ENCODE measurements at regions of chr18 and their contacts with region 1.

Region 1: GRCh38 chr18:44909191-44909719 is 228.6 kb downstream of the SETBP1 start:
- DNase-seq: no peak
- H3K4me3 Mint-ChIP-seq: no peak overlapping the region
- H3K27ac Mint-ChIP-seq: no peak overlapping the region
- H3K4me1 Mint-ChIP-seq: no peaks in the 10 kb centered on the region
- H3K27me3 Mint-ChIP-seq: no peaks in the 10 kb centered on the region
- CTCF ChIP-seq: no peak

Region 2: DNA sequence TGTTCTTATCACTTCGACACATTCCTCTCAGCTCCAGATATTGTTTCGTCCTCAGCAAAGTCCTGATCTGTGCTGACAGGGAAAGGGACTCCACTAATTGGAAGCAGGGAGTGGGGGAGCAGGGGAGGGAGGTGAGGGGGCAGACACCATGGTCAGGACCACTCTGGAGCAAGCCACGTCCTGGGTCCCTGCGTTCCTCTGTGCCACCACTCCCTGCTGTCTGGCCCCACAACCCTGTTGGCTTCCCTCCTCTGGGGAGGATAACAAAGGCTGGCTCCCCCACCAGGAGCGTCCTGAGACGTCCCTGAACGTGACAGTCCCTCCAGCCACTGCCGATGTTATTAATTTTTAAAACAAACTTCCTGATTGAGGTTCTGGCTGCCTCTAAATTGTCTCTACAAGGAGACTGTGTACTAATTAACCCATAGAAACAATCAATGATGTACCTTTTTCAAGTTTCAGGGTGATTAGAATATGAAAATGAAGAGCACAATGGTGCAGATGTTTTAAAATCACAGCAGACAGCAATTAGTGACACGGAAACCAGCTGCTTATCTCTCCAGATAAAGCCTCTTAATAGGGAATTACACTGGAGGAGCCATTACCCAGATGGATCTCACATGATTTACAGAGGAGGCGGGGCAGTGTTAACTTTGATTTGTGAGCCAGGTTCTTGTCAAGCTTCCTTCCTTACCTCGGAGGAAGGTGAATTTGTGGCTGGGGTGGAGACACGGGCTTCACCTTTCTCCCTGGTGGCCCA is 28.9 kb after region 1 on chr18:
- CTCF ChIA-PET with region 1: no interaction called
- intact Hi-C with region 1: no loop called
- DNase-seq: peak; percentile 10
- H3K4me3 Mint-ChIP-seq: no peak overlapping the region
- H3K27ac Mint-ChIP-seq: peak overlapping the region; percentile 29
- H3K4me1 Mint-ChIP-seq: peaks cover 22% of the 10 kb centered on the region
- H3K27me3 Mint-ChIP-seq: no peaks in the 10 kb centered on the region
- CTCF ChIP-seq: no peak

Region 3: DNA sequence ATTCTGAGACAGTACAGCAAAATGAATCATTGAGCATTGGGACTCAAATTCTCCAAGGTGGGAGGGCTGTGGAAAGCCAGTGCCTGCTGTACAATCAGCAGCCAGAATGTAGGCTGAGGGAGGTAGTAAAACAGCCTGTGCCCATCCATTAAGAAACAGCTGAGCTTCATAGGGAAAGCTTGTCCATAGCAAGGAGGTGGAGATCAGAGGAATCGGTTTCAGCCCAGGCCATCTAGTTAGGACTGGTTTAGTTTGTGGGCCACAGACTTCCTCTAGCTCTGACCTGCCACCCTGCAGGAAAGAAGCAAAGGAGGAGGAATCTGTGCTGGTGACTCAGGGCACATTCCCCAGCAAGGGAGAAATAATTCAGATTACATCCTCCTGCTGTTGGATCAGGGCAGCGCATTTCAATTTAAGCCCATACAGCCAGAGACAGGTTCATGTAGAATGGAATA is 104.8 kb after region 1 on chr18:
- CTCF ChIA-PET with region 1: no interaction called
- intact Hi-C with region 1: loop called (anchors 10 kb)
- DNase-seq: peak; percentile 43
- H3K4me3 Mint-ChIP-seq: no peak overlapping the region
- H3K27ac Mint-ChIP-seq: no peak overlapping the region
- H3K4me1 Mint-ChIP-seq: peaks cover 64% of the 10 kb centered on the region
- H3K27me3 Mint-ChIP-seq: no peaks in the 10 kb centered on the region
- CTCF ChIP-seq: no peak

Measured in Calu3 (cell line).